ENCODE measurements at regions of chr6 and their contacts with region 1.

Region 1: GRCh38 chr6:73329201-73329600 is 24.9 kb downstream of the DPPA5 start:
- DNase-seq: no peak
- ATAC-seq: no peak
- H3K4me3 ChIP-seq: no peak overlapping the region
- H3K4me3 Mint-ChIP-seq: no peak overlapping the region
- H3K27ac ChIP-seq: no peak overlapping the region
- H3K27ac Mint-ChIP-seq: peak overlapping the region; percentile 33
- H3K4me1 ChIP-seq: no peaks in the 10 kb centered on the region
- H3K4me1 Mint-ChIP-seq: no peaks in the 10 kb centered on the region
- H3K27me3 ChIP-seq: no peaks in the 10 kb centered on the region
- H3K27me3 Mint-ChIP-seq: peaks cover 23% of the 10 kb centered on the region
- CTCF ChIP-seq: no peak

Region 2: DNA sequence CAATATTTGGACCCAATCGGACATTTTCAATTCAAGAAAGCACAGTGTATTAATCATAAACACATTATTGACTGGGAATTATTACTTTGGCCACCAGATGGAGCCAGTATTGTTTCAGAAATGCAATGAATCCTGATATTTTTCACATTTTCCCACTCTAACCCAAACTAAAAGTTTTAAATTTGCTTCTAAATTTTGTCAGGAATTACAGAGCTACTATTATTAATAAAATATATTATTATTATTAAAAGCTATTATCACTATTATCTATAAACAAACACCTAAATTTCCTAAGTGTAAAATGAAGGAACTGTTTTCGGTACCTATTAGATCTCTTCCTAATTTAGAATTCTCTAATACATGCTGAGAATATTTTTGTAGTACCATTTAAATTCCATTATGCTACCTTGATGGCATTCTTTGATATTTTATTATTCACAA is 1795.2 kb before region 1 on chr6:
- CTCF ChIA-PET with region 1: interaction called, 3 read pairs
- POLR2A ChIA-PET with region 1: no interaction called
- intact Hi-C with region 1: loop called in 1 of 2 experiments (anchors 5 kb)
- DNase-seq: peak in 1 of 9 experiments; percentile 5
- ATAC-seq: no peak
- H3K4me3 ChIP-seq: no peak overlapping the region
- H3K4me3 Mint-ChIP-seq: no peak overlapping the region
- H3K27ac ChIP-seq: no peak overlapping the region
- H3K27ac Mint-ChIP-seq: no peak overlapping the region
- H3K4me1 ChIP-seq: no peaks in the 10 kb centered on the region
- H3K4me1 Mint-ChIP-seq: no peaks in the 10 kb centered on the region
- H3K27me3 ChIP-seq: no peaks in the 10 kb centered on the region
- H3K27me3 Mint-ChIP-seq: no peaks in the 10 kb centered on the region
- CTCF ChIP-seq: peak; percentile 65

Region 3: DNA sequence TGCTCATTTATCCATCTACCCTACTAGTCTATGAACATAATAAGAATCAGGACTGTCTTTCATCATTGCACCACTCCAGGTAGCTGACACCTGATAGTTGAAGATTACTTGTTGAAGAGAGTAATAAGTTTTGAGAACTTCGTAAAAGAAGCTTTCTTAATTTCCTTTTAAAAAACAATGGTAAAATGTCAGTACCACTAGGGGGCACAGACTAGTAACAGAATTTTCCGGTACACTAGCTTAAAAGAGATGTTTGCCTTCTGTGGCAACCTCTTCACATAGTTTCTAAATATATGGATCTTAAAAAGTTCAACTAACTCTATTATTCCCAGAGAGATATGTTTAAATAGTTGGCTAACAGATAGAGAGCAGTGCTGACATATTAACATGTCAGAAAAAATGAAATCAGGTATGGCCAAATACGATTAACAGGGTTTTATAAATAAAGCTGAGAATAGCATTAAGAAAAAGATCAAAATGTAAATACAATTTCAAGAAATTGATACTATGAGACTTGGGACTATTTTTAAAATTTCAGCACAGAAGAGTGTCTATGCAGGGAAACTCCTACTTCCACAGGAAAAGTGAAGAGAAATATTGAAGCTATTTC is 712.7 kb before region 1 on chr6:
- CTCF ChIA-PET with region 1: interaction called, 11 read pairs
- POLR2A ChIA-PET with region 1: no interaction called
- intact Hi-C with region 1: loop called (anchors 2 to 5 kb)
- DNase-seq: peak in 2 of 9 experiments; percentile 50 to 67
- ATAC-seq: no peak
- H3K4me3 ChIP-seq: no peak overlapping the region
- H3K4me3 Mint-ChIP-seq: no peak overlapping the region
- H3K27ac ChIP-seq: no peak overlapping the region
- H3K27ac Mint-ChIP-seq: peak overlapping the region; percentile 68
- H3K4me1 ChIP-seq: peaks cover 19% of the 10 kb centered on the region
- H3K4me1 Mint-ChIP-seq: peaks cover 51% of the 10 kb centered on the region
- H3K27me3 ChIP-seq: no peaks in the 10 kb centered on the region
- H3K27me3 Mint-ChIP-seq: no peaks in the 10 kb centered on the region
- CTCF ChIP-seq: peak; percentile 71

Region 4: GRCh38 chr6:73129653-73130443 is 199.4 kb before region 1 on chr6:
- CTCF ChIA-PET with region 1: interaction called, 6 read pairs
- POLR2A ChIA-PET with region 1: no interaction called
- intact Hi-C with region 1: loop called (anchors 1 to 5 kb)
- DNase-seq: peak; percentile 54 to 89 (median 77)
- ATAC-seq: peak; percentile 83
- H3K4me3 ChIP-seq: no peak overlapping the region
- H3K4me3 Mint-ChIP-seq: peak overlapping the region; percentile 16
- H3K27ac ChIP-seq: no peak overlapping the region
- H3K27ac Mint-ChIP-seq: no peak overlapping the region
- H3K4me1 ChIP-seq: no peaks in the 10 kb centered on the region
- H3K4me1 Mint-ChIP-seq: peaks cover 4% of the 10 kb centered on the region
- H3K27me3 ChIP-seq: no peaks in the 10 kb centered on the region
- H3K27me3 Mint-ChIP-seq: peaks cover 2% of the 10 kb centered on the region
- CTCF ChIP-seq: peak; percentile 94

Region 5: GRCh38 chr6:73285674-73286283 is 43.4 kb before region 1 on chr6:
- CTCF ChIA-PET with region 1: interaction called, 13 read pairs
- POLR2A ChIA-PET with region 1: no interaction called
- intact Hi-C with region 1: loop called (anchors 1 to 5 kb)
- DNase-seq: peak in 1 of 9 experiments; percentile 35
- ATAC-seq: no peak
- H3K4me3 ChIP-seq: no peak overlapping the region
- H3K4me3 Mint-ChIP-seq: no peak overlapping the region
- H3K27ac ChIP-seq: no peak overlapping the region
- H3K27ac Mint-ChIP-seq: no peak overlapping the region
- H3K4me1 ChIP-seq: no peaks in the 10 kb centered on the region
- H3K4me1 Mint-ChIP-seq: no peaks in the 10 kb centered on the region
- H3K27me3 ChIP-seq: no peaks in the 10 kb centered on the region
- H3K27me3 Mint-ChIP-seq: no peaks in the 10 kb centered on the region
- CTCF ChIP-seq: no peak

Region 6: GRCh38 chr6:73367761-73368355 is 38.7 kb after region 1 on chr6:
- CTCF ChIA-PET with region 1: no interaction called
- POLR2A ChIA-PET with region 1: no interaction called
- intact Hi-C with region 1: no loop called
- DNase-seq: no peak
- ATAC-seq: no peak
- H3K4me3 ChIP-seq: no peak overlapping the region
- H3K4me3 Mint-ChIP-seq: no peak overlapping the region
- H3K27ac ChIP-seq: no peak overlapping the region
- H3K27ac Mint-ChIP-seq: no peak overlapping the region
- H3K4me1 ChIP-seq: no peaks in the 10 kb centered on the region
- H3K4me1 Mint-ChIP-seq: no peaks in the 10 kb centered on the region
- H3K27me3 ChIP-seq: no peaks in the 10 kb centered on the region
- H3K27me3 Mint-ChIP-seq: peaks cover 2% of the 10 kb centered on the region
- CTCF ChIP-seq: no peak

Measured in CD8-positive, alpha-beta T cell (primary cell).